A549 (cell line): ENCODE measurements at regions of chr5 and their contacts with region 1.

Region 1: GRCh38 chr5:38540314-38540713 is 16.1 kb downstream of the LIFR start:
- DNase-seq: no peak
- ATAC-seq: no peak
- H3K4me3 ChIP-seq: no peak overlapping the region
- H3K27ac ChIP-seq: no peak overlapping the region
- H3K4me1 ChIP-seq: peaks cover 13% of the 10 kb centered on the region
- CTCF ChIP-seq: no peak
- EP300 ChIP-seq: no peak
- POLR2A ChIP-seq: no peak
- RAD21 ChIP-seq: no peak

Region 2: GRCh38 chr5:38509185-38509584 is 31.1 kb before region 1 on chr5:
- CTCF ChIA-PET with region 1: no interaction called
- POLR2A ChIA-PET with region 1: no interaction called
- DNase-seq: no peak
- ATAC-seq: no peak
- H3K4me3 ChIP-seq: no peak overlapping the region
- H3K27ac ChIP-seq: no peak overlapping the region
- H3K4me1 ChIP-seq: no peaks in the 10 kb centered on the region
- CTCF ChIP-seq: no peak
- EP300 ChIP-seq: no peak
- POLR2A ChIP-seq: no peak
- RAD21 ChIP-seq: no peak

Region 3: DNA sequence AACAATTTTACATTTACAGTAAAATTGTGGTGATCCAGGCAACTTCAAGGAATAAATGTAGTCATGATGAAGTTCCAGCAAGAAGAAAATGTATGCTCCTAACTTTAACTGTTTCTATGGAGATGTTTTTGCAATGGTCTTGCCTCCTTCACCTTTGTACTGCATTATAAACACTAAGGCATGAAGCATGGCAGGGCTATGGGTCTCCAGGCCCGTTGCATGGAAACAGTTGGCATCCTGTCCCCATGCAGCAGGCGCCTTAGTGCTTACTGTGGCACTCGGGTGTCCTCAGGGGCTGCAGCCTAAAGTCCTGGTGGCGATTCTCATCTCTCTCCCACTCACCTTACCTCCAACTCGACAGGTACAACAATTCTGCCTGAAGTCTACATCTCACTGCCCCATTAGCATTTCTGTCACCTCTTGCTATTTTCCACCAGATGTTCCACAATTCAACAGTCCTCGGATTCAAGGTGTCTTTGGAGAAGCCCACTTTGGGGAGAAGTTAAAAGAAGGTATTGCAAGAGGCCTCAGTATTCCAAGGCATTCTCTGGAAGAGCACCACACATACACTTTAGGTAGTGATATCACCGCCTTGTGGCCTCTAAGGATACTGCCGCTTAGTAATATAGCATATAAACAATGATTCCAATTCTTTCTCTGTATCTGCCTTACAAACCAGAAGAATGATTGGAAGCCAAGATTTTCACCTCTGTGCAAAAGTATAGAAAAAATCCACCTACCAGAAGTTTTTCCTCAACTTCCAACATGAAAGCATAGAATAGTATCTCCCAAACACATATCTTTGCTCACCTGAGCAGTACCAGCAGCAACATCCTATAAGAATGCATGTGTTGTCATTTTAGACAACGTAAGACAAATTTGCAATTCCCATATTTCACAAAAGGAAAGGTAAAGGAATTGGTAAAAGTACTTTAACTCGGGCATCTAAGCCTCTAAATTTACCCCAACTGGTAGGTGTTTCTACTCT is 11.0 kb after region 1 on chr5:
- CTCF ChIA-PET with region 1: interaction called, 17 read pairs
- POLR2A ChIA-PET with region 1: no interaction called
- DNase-seq: peak; percentile 38 to 65
- ATAC-seq: peak; percentile 51 to 85; a peak in 3 of 6 replicates
- H3K4me3 ChIP-seq: no peak overlapping the region
- H3K27ac ChIP-seq: no peak overlapping the region
- H3K4me1 ChIP-seq: peaks cover 19% of the 10 kb centered on the region; the same call in 2 of the 3 replicates
- CTCF ChIP-seq: peak; percentile 70
- EP300 ChIP-seq: no peak
- POLR2A ChIP-seq: no peak
- RAD21 ChIP-seq: peak; percentile 63 to 69